Dendritic cell treated with granulocyte-macrophage colony-stimulating factor and Interleukin-4, amounts not matched to agents 40 ng/mL and 50 ng/mL, for 4 days (primary cell): ENCODE measurements at regions of chr18 and their contacts with region 1.

Region 1: DNA sequence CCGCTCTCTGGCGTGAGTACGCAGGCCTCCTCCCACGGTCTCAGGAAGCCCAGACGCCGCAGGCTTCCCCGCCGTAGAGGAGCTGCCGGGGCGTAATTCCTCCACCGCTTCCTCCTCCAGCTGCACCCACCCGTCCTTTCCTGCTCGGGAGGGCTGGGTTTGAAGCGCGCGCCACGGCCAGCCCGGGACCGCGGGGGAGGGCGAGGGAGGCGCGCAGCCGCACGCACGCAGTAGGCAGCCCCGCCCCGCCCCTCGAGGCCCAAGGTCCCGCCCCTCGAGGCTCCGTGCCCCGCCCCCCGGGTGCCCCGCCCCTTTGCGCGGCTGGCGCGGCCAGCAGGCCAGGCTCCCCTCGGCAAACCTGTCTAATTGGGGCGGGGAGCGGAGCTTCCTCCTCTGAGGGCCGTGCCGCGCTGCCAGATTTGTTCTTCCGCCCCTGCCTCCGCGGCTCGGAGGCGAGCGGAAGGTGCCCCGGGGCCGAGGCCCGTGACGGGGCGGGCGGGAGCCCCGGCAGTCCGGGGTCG is at the start of gene MALT1:
- H3K4me3 Mint-ChIP-seq: peak within 1 kb of the TSS; percentile 88
- H3K27ac Mint-ChIP-seq: peak within 1 kb of the TSS; percentile 91
- H3K4me1 Mint-ChIP-seq: peaks cover 47% of the 10 kb centered on the region
- H3K27me3 Mint-ChIP-seq: peaks cover 4% of the 10 kb centered on the region

Region 2: GRCh38 chr18:58535340-58536201 is 135.6 kb before region 1 on chr18:
- intact Hi-C with region 1: loop called (anchors 2 kb)
- H3K4me3 Mint-ChIP-seq: no peak overlapping the region
- H3K27ac Mint-ChIP-seq: peak overlapping the region; percentile 80
- H3K4me1 Mint-ChIP-seq: peaks cover 52% of the 10 kb centered on the region
- H3K27me3 Mint-ChIP-seq: peaks cover 4% of the 10 kb centered on the region

Region 3: GRCh38 chr18:58552057-58552461 is 119.1 kb before region 1 on chr18:
- intact Hi-C with region 1: no loop called
- H3K4me3 Mint-ChIP-seq: no peak overlapping the region
- H3K27ac Mint-ChIP-seq: no peak overlapping the region
- H3K4me1 Mint-ChIP-seq: peaks cover 27% of the 10 kb centered on the region
- H3K27me3 Mint-ChIP-seq: peaks cover 26% of the 10 kb centered on the region

Region 4: GRCh38 chr18:58639751-58640427 is 31.3 kb before region 1 on chr18:
- intact Hi-C with region 1: no loop called
- H3K4me3 Mint-ChIP-seq: no peak overlapping the region
- H3K27ac Mint-ChIP-seq: no peak overlapping the region
- H3K4me1 Mint-ChIP-seq: peaks cover 26% of the 10 kb centered on the region
- H3K27me3 Mint-ChIP-seq: no peaks in the 10 kb centered on the region